ENCODE measurements at regions of chr11 and their contacts with region 1.

Region 1: GRCh38 chr11:76807206-76807875 is 24.2 kb downstream of the TSKU start:
- DNase-seq: peak; percentile 88 to 98
- H3K4me3 ChIP-seq: no peak overlapping the region
- CTCF ChIP-seq: peak in 1 of 3 donors; percentile 72
- POLR2A ChIP-seq: no peak

Region 2: GRCh38 chr11:77039491-77040400 is 232.4 kb after region 1 on chr11:
- intact Hi-C with region 1: loop called (anchors 10 kb)
- DNase-seq: no peak
- H3K4me3 ChIP-seq: no peak overlapping the region
- CTCF ChIP-seq: no peak
- POLR2A ChIP-seq: no peak

Region 3: GRCh38 chr11:77082838-77083562 is 275.7 kb after region 1 on chr11:
- intact Hi-C with region 1: loop called (anchors 10 kb)
- DNase-seq: peak; percentile 47 to 90
- H3K4me3 ChIP-seq: no peak overlapping the region
- CTCF ChIP-seq: no peak
- POLR2A ChIP-seq: no peak

Region 4: DNA sequence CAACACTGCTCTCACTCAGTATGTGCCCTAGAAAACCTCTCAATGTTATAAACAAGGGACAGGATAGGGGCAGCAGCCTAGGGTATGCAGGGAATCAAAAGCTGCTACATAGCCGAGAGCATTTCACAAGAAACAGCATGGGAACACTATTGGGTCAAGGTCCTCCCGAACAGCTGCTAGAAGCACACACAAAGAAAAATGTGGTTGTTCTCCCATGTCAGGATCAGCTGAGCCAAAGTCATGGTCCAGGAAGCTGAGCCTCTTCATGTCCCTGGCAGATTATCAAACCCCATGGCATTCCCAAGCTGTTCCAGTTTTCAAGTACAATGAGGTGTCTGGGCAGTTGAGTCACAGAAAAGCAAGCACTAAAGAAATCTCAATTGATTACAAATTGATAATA is 515.2 kb after region 1 on chr11:
- intact Hi-C with region 1: no loop called
- DNase-seq: no peak
- H3K4me3 ChIP-seq: no peak overlapping the region
- CTCF ChIP-seq: no peak
- POLR2A ChIP-seq: no peak

Measured in lower leg skin (tissue), 4 donors.